Spleen (tissue), 13 donors: ENCODE measurements at regions of chr3 and their contacts with region 1.

Region 1: GRCh38 chr3:58414538-58415197 is 19.0 kb downstream of the PDHB start:
- DNase-seq: no peak
- H3K4me3 ChIP-seq: no peak overlapping the region
- H3K27ac ChIP-seq: peak overlapping the region in 3 of 8 donors; percentile 19 to 31 (median 24)
- H3K4me1 ChIP-seq: peaks cover 0 to 34% (median 24%) of the 10 kb centered on the region in 6 donors
- H3K27me3 ChIP-seq: no peaks in the 10 kb centered on the region
- CTCF ChIP-seq: peak; percentile 43 to 91 (median 81)
- POLR2A ChIP-seq: no peak

Region 2: DNA sequence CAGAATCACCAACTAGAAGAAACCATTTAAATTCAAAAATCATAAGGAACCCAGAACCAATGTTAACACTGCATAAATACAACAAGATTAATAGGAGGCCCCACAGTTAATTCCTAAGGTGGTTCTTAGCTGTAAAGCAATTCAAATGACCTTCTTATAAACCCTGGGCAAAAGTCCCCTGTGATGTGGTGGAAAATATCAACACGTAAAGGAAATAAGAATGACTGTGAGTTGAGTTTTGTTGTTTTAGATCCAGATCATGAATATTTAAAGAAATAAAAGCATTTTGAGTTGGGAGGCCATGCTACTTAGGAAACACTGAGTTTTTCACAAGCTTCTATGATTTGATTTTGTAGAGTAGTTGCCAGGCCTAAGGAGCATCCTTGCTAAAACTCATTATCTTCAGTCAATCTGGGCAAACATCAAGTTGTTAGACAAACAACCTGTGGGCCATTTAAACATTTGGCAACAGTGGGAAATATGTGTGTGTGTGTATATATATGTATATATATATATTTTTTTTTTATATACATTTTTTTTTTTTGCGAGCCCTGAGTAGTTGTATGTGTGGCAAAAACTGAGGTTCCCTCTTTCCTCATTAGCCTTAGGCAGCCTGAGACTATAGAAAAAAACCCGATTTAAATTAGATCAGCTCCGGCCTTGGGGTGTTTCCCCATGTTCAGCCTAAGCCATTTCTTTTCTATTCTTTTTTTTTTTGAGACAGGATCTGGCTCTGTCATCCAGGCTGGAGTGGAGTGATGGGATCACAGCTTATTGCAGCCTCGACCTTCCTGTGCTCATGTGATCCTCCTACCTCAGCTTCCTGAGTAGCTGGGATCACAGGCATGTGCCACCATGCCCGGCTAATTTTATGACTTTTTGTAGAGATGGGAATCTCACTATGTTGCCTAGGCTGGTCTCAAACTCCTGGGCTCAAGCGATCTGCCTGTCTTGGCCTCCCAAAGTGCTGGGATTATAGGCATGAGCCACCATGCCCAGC is 90.0 kb before region 1 on chr3:
- intact Hi-C with region 1: loop called (anchors 5 kb)
- DNase-seq: no peak
- H3K4me3 ChIP-seq: no peak overlapping the region
- H3K27ac ChIP-seq: peak overlapping the region; percentile 21 to 79 (median 70)
- H3K4me1 ChIP-seq: peaks cover 20 to 62% (median 40%) of the 10 kb centered on the region in 6 donors
- H3K27me3 ChIP-seq: no peaks in the 10 kb centered on the region
- CTCF ChIP-seq: no peak
- POLR2A ChIP-seq: no peak

Region 3: GRCh38 chr3:58366699-58367098 is 48.0 kb before region 1 on chr3:
- intact Hi-C with region 1: no loop called
- DNase-seq: no peak
- H3K4me3 ChIP-seq: no peak overlapping the region
- H3K27ac ChIP-seq: no peak overlapping the region
- H3K4me1 ChIP-seq: peaks cover 0 to 66% (median 21%) of the 10 kb centered on the region in 6 donors
- H3K27me3 ChIP-seq: no peaks in the 10 kb centered on the region
- CTCF ChIP-seq: no peak
- POLR2A ChIP-seq: no peak